ENCODE measurements at regions of chr5 and their contacts with region 1.

Region 1: DNA sequence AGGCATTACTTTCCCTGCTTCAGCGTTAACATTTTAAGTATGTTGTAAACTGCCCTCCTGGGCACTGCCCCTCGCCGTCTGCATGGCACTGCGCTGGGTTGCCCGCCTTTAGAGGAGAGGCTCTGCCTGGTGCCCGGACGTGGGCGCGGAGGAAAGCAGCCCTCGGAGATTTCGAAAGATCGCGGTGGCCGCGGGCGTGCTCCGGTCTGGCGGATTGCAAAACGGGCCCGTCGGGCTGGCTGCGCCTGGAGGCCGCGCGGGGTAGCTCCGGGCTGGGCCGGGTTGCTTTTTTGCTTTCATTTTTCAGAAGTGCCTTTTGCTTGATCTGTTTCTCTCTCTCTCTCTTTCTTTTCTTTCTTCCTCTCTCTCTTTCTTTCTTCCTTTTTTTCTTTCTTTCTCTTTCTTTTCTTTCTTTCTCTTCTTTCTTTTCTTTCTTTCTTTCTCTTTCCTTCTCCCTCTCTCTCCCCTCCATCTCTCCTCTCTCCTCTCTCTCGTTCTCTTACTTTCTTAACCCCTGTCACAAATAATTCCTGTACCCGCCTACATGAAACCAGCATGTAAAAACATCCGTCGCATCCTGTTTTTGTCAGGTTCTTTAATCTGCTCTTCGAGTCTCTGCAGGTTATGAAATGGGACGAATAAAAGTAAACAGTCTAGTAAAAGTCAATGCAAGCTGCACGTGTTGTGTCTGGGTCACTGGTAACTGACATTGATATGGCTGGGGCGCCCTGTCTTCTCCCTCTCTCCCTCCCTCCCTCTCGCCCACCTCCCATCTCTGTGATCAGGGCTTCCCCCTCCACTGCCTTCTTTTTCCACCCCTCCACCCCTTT is 1.7 kb downstream of the FST start:
- DNase-seq: peak; percentile 48 to 80
- ATAC-seq: peak; percentile 61 to 78 (median 74)
- H3K4me3 ChIP-seq: peak overlapping the region; percentile 7 to 85 (median 66)
- H3K27ac ChIP-seq: peak overlapping the region in 8 of 10 donors; percentile 0 to 71 (median 38)
- H3K4me1 ChIP-seq: peaks cover 0 to 40% (median 21%) of the 10 kb centered on the region in 9 donors
- H3K27me3 ChIP-seq: peaks cover 0 to 67% (median 0%) of the 10 kb centered on the region in 7 donors
- CTCF ChIP-seq: peak in 4 of 9 donors; percentile 15 to 32 (median 26)

Region 2: GRCh38 chr5:52878656-52879055 is 603.4 kb before region 1 on chr5:
- intact Hi-C with region 1: no loop called
- DNase-seq: no peak
- ATAC-seq: no peak
- H3K4me3 ChIP-seq: no peak overlapping the region
- H3K27ac ChIP-seq: no peak overlapping the region
- H3K4me1 ChIP-seq: peaks cover 0 to 20% (median 8%) of the 10 kb centered on the region in 9 donors
- H3K27me3 ChIP-seq: no peaks in the 10 kb centered on the region
- CTCF ChIP-seq: no peak

Region 3: GRCh38 chr5:53874409-53874808 is 392.3 kb after region 1 on chr5:
- intact Hi-C with region 1: loop called in 9 of 10 experiments (anchors 5 to 10 kb)
- DNase-seq: no peak
- ATAC-seq: no peak
- H3K4me3 ChIP-seq: no peak overlapping the region
- H3K27ac ChIP-seq: no peak overlapping the region
- H3K4me1 ChIP-seq: peaks cover 0 to 8% (median 0%) of the 10 kb centered on the region in 9 donors
- H3K27me3 ChIP-seq: no peaks in the 10 kb centered on the region
- CTCF ChIP-seq: peak in 3 of 9 donors; percentile 17 to 18 (median 17)

Region 4: GRCh38 chr5:54049963-54050362 is 567.9 kb after region 1 on chr5:
- intact Hi-C with region 1: loop called in 1 of 10 experiments (anchors 10 kb)
- DNase-seq: no peak
- ATAC-seq: peak in 7 of 8 donors; percentile 59 to 86 (median 73)
- H3K4me3 ChIP-seq: no peak overlapping the region
- H3K27ac ChIP-seq: peak overlapping the region in 8 of 10 donors; percentile 4 to 83 (median 50)
- H3K4me1 ChIP-seq: peaks cover 0 to 17% (median 0%) of the 10 kb centered on the region in 9 donors
- H3K27me3 ChIP-seq: no peaks in the 10 kb centered on the region
- CTCF ChIP-seq: no peak

Region 5: GRCh38 chr5:54229041-54229780 is 747.1 kb after region 1 on chr5:
- intact Hi-C with region 1: loop called in 5 of 10 experiments (anchors 5 kb)
- DNase-seq: peak; percentile 70
- ATAC-seq: peak in 6 of 8 donors; percentile 62 to 72 (median 66)
- H3K4me3 ChIP-seq: no peak overlapping the region
- H3K27ac ChIP-seq: no peak overlapping the region
- H3K4me1 ChIP-seq: peaks cover 0 to 49% (median 25%) of the 10 kb centered on the region in 9 donors
- H3K27me3 ChIP-seq: no peaks in the 10 kb centered on the region
- CTCF ChIP-seq: peak; percentile 79 to 94 (median 90)

Region 6: DNA sequence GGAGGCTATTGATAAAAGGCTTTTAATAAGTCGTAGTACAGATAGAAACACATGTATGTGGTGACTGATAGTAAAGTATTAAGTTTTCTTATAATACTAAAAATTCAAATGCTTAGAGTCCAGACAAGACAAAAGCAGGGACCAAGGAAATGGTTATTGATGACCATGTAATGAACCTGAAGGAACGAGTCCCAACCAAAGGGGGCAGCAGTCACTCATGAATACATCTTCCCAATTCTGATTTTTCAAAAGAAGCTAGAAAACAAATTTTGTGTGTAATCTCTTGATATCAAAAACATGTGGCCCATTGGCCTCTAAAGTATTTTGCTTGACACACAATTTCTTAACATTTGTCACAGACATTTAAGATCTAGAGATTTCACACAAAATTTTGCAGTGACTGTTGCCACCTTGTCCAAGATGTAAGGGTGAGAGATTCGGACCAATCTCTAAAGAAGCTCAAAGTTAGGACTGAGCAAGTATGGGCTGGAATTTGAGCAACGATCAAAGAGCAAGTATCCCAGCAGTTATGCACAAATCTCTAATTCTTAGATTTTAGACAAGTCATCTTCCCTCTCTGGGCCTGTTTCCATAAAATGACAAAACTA is 761.5 kb after region 1 on chr5:
- intact Hi-C with region 1: loop called in 1 of 10 experiments (anchors 5 kb)
- DNase-seq: peak in 1 of 2 donors; percentile 21
- ATAC-seq: no peak
- H3K4me3 ChIP-seq: no peak overlapping the region
- H3K27ac ChIP-seq: no peak overlapping the region
- H3K4me1 ChIP-seq: peaks cover 0 to 70% (median 14%) of the 10 kb centered on the region in 9 donors
- H3K27me3 ChIP-seq: no peaks in the 10 kb centered on the region
- CTCF ChIP-seq: peak; percentile 29 to 81 (median 70)

Measured in heart right ventricle (tissue), 16 donors.